Body of pancreas (tissue), 4 donors: ENCODE measurements at regions of chr12 and their contacts with region 1.

Region 1: DNA sequence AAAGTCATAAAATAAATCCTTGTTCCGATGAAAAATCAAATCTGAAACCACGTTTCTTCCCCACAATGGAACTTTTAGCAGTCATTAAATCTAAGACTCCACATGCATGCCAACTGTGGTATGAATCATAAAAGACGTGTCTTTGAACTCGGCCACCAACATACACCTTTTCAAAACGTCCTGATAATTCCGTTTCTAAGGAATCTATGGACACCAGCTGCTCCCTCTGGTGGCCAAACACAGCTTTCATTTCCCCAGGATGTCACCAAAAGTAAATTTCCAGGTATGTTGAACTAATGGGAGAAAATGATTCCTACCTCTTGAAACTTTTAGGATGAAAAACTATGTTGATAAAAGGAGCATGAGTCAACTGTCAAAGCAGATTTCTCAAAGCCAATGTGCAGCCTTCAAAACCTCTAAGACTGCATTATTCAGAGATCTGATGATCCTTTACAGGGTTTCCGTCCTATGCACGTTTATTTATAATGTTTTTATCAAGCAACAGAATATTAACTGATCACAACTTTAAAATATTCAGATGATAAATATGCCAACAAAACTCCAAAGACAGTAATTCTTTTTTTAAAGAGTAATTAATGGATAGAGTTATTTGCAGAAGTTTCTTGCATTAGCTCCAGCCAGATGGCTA is 96.2 kb downstream of the CIT start:
- DNase-seq: peak; percentile 63 to 80 (median 68)
- ATAC-seq: peak; percentile 53
- H3K4me3 ChIP-seq: no peak overlapping the region
- H3K27ac ChIP-seq: no peak overlapping the region
- H3K4me1 ChIP-seq: no peaks in the 10 kb centered on the region
- H3K27me3 ChIP-seq: no peaks in the 10 kb centered on the region
- CTCF ChIP-seq: peak; percentile 50 to 84 (median 75)
- POLR2A ChIP-seq: no peak

Region 2: DNA sequence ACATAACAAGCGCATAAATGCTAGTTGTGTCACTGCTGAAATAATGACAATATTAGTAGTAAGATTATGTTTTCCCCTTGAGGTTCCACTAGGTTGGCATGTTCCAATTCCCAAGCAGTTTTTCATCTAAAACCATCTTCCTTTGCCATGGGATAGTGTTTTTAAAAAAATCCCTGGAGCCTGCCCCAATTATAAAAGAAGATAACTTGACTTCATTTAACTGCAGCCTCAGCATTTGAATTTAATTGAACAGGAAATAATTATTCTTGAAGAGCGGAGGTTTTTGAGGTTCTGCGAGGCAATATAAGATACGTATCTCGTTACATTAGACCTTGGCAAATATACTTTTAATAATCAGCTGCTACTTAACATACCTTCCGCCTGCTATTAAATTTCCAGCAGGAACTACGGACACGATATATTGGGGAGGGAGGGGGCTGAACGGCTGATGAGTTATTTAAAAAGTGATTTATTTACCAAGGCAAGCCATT is 667.4 kb before region 1 on chr12:
- intact Hi-C with region 1: no loop called
- DNase-seq: no peak
- ATAC-seq: no peak
- H3K4me3 ChIP-seq: no peak overlapping the region
- H3K27ac ChIP-seq: no peak overlapping the region
- H3K4me1 ChIP-seq: peaks cover 5% of the 10 kb centered on the region
- H3K27me3 ChIP-seq: no peaks in the 10 kb centered on the region
- CTCF ChIP-seq: no peak
- POLR2A ChIP-seq: no peak

Region 3: GRCh38 chr12:119667577-119668323 is 113.2 kb before region 1 on chr12 and contains the start of gene PRKAB1:
- intact Hi-C with region 1: loop called (anchors 10 kb)
- DNase-seq: peak; percentile 97 to 99 (median 99)
- ATAC-seq: peak; percentile 98
- H3K4me3 ChIP-seq: peak within 1 kb of the TSS; percentile 84 to 94
- H3K27ac ChIP-seq: peak within 1 kb of the TSS; percentile 91 to 96 (median 94)
- H3K4me1 ChIP-seq: peaks cover 38% of the 10 kb centered on the region
- H3K27me3 ChIP-seq: no peaks in the 10 kb centered on the region
- CTCF ChIP-seq: peak; percentile 86 to 98 (median 96)
- POLR2A ChIP-seq: peak; percentile 83 to 96 (median 92)
- total RNA-seq, gene PRKAB1: 13.5 to 20.5 TPM

Region 4: DNA sequence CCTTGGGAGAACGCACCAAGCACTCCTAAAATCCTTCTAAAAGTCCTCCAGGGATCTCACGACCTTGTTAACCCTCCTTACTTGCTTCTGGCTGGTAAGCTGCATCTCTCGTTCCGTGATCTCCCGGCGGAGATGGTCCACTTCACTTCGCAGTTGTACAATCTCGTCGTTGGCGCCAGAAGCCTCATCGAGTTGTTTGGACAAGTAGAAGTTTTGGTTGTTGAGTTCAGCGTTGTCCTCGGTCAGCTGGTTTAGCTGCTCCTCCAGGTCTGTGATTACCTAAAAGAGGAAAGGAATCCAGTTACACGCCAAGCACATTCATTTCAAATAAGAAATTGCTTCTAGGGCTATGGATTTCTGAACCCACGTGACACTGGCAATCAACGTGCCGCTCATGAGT is 45.8 kb before region 1 on chr12:
- intact Hi-C with region 1: no loop called
- DNase-seq: no peak
- ATAC-seq: no peak
- H3K4me3 ChIP-seq: no peak overlapping the region
- H3K27ac ChIP-seq: no peak overlapping the region
- H3K4me1 ChIP-seq: no peaks in the 10 kb centered on the region
- H3K27me3 ChIP-seq: no peaks in the 10 kb centered on the region
- CTCF ChIP-seq: no peak
- POLR2A ChIP-seq: no peak

Region 5: GRCh38 chr12:119869720-119870119 is 88.8 kb after region 1 on chr12:
- intact Hi-C with region 1: no loop called
- DNase-seq: no peak
- ATAC-seq: no peak
- H3K4me3 ChIP-seq: no peak overlapping the region
- H3K27ac ChIP-seq: no peak overlapping the region
- H3K4me1 ChIP-seq: no peaks in the 10 kb centered on the region
- H3K27me3 ChIP-seq: no peaks in the 10 kb centered on the region
- CTCF ChIP-seq: no peak
- POLR2A ChIP-seq: no peak